Activated B cell treated with CpG ODN at 0.5 μM for 24 hours (primary cell): ENCODE measurements at regions of chr21 and their contacts with region 1.

Region 1: DNA sequence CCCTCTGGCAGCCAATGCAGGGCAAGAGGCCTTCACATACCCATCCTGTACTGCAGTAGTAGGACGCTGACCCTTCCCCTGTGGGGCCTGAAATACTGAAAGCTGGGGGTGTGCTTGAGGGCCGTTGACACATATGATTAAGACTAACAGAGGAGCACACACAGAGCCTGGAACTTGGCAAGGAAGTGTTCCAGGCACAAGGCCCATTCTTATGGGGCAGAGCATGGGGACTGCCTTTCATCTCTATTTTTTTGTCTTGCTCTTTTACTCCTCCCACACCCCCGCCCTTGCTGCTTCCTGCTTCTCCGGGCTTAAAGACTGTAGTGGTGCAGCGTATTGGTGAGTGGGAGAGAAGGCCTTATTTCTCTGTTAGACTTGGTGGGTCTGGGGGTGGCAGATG is 137.4 kb downstream of the BACH1 start:
- DNase-seq: no peak
- ATAC-seq: no peak
- H3K4me3 Mint-ChIP-seq: no peak overlapping the region
- H3K27ac Mint-ChIP-seq: no peak overlapping the region
- H3K4me1 Mint-ChIP-seq: peaks cover 18% of the 10 kb centered on the region
- H3K27me3 Mint-ChIP-seq: no peaks in the 10 kb centered on the region
- CTCF ChIP-seq: no peak

Region 2: DNA sequence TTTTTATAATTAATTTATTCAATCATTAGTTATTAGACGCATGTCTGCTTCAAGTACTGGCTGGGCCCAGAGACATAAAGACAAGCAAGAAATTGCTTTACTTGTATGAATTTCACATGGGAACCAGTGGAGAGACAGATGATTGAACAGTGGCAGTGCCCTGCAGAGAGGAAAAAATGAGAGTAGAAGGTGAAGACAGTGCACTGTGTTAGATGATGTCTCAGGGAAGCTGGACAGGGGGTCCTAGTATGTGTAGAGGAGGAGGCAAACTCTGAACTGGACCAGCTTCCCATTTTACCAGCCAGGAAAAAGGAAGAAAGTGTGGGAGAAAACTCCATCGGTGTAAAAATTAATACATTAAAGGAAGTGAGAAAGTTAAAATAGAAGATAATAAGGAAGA is 11.4 kb before region 1 on chr21:
- CTCF ChIA-PET with region 1: no interaction called
- POLR2A ChIA-PET with region 1: no interaction called
- intact Hi-C with region 1: loop called (anchors 2 kb)
- DNase-seq: no peak
- ATAC-seq: no peak
- H3K4me3 Mint-ChIP-seq: no peak overlapping the region
- H3K27ac Mint-ChIP-seq: no peak overlapping the region
- H3K4me1 Mint-ChIP-seq: peaks cover 16% of the 10 kb centered on the region
- H3K27me3 Mint-ChIP-seq: no peaks in the 10 kb centered on the region
- CTCF ChIP-seq: no peak